Posterior vena cava (tissue), 2 donors: ENCODE measurements at regions of chr10 and their contacts with region 1.

Region 1: GRCh38 chr10:29127037-29127700 is 161.7 kb upstream of the LYZL1 start:
- DNase-seq: no peak

Region 2: DNA sequence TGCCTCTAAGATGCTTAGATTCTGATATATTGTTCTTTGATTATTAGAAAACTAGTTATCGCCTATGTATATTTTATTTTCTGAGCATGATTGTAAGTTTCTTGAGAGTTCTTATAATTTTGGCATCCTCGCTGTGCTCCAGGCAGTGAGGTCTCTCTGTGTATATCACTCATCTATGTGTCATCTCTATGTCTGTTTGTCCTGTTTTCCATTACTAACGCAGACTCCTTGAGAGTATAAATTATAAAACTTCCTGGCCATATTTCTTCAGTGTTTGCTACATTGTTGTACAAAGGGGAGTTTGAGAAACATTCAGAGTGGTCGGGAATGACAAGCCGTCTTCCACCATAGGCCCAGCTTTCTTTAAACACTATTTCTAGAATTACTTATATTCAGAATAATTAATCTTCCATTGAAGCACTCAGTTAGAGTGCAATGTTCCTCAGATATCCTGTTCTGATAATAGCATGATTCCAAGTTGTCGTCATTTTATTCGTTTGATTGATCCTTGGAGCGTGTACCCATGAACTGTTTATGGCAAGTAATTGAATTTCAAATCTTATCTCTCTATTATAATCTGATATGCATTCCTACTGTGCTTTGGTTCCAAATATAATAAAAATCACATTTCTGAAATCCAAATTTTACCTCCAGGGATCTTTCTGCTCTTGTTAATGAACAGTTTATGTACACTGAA is 243.3 kb before region 1 on chr10:
- intact Hi-C with region 1: loop called in 1 of 2 experiments (anchors 2 kb)
- DNase-seq: no peak